ENCODE measurements at regions of chr11 and their contacts with region 1.

Region 1: DNA sequence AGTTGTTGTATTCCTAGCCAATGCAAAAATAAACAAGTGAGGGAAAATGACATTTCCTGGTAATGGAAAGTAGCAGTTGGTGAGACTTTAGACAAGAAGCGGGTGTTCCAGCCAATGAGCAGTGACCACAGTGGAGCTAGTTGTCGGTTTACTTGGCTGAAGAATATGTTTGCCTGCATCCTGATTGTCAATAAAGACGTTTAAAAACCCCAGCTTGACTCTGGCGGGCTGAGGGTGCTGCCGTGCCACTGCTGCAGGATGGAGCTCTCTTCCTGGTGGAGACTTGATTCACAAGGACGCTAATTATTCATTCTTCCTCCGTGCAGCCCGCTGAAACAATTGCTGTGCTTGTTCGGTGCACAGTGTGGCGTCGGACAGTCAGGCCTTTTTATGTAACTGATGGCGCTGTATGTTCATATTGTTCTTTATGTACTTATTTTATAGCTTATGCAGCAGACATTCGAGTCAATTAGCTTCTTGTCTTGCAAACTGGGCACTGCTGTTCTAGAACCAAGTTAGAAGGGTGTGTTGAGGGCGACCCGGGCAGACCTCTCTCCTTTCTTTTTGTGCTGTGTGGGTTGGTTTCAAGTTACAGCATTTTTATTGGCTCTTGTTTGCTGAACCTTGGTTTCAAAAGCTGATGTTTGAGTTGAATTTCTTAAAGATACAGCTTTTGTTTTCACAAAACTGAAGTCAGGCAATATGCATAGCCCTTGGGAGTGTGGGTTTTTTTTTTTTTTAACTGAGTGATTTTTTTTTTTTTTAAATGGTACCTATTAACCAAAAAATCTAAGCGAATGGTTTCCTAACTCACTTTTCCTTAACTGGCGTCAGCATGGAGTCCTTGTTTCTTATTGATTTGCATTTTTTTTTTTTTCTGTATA is 153.9 kb downstream of the TEAD1 start:
- DNase-seq: peak; percentile 53 to 66
- H3K4me3 ChIP-seq: peak overlapping the region; percentile 39
- H3K4me3 Mint-ChIP-seq: peak overlapping the region; percentile 90
- H3K27ac Mint-ChIP-seq: peak overlapping the region; percentile 93
- H3K4me1 ChIP-seq: peaks cover 40% of the 10 kb centered on the region
- H3K4me1 Mint-ChIP-seq: peaks cover 53% of the 10 kb centered on the region
- H3K27me3 ChIP-seq: no peaks in the 10 kb centered on the region
- H3K27me3 Mint-ChIP-seq: no peaks in the 10 kb centered on the region
- CTCF ChIP-seq: peak in 1 of 2 experiments; percentile 3

Region 2: DNA sequence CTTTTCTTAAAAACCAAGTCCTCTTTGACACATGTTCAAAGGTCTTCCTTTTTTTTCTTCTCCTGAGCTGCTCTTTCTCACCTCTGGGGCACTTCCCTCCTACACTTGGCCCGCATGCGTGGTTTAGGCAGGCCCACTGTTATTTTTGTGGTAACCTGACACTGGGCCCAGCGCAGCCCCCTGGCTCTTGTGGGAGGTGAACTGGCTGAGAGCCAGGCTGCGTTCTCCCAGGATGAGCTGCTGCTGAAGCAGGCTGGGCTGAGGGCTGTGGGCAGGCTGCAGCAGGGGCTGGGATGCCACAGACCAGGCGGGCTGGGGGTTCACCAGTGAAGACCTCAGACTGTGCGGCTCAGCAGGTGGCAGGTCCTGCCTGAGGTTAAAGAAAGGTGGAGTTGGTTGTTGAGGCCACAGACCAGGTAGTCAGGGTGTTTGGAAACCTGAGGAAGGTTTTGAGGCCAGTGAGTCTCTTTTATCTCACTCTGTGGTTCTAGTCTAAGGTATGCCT is 81.5 kb before region 1 on chr11:
- CTCF ChIA-PET with region 1: no interaction called
- POLR2A ChIA-PET with region 1: no interaction called
- intact Hi-C with region 1: no loop called
- DNase-seq: peak in 1 of 2 experiments; percentile 7
- H3K4me3 ChIP-seq: no peak overlapping the region
- H3K4me3 Mint-ChIP-seq: no peak overlapping the region
- H3K27ac Mint-ChIP-seq: no peak overlapping the region
- H3K4me1 ChIP-seq: peaks cover 4% of the 10 kb centered on the region; the same call in 1 of the 2 replicates
- H3K4me1 Mint-ChIP-seq: peaks cover 24% of the 10 kb centered on the region
- H3K27me3 ChIP-seq: no peaks in the 10 kb centered on the region
- H3K27me3 Mint-ChIP-seq: no peaks in the 10 kb centered on the region
- CTCF ChIP-seq: no peak

Region 3: GRCh38 chr11:12813371-12814225 is 14.6 kb before region 1 on chr11:
- CTCF ChIA-PET with region 1: interaction called, 11 read pairs
- POLR2A ChIA-PET with region 1: interaction called, 4 read pairs
- intact Hi-C with region 1: loop called (anchors 1 kb)
- DNase-seq: no peak
- H3K4me3 ChIP-seq: no peak overlapping the region
- H3K4me3 Mint-ChIP-seq: peak overlapping the region; percentile 60
- H3K27ac Mint-ChIP-seq: peak overlapping the region; percentile 88
- H3K4me1 ChIP-seq: peaks cover 70% of the 10 kb centered on the region
- H3K4me1 Mint-ChIP-seq: peaks cover 48% of the 10 kb centered on the region
- H3K27me3 ChIP-seq: no peaks in the 10 kb centered on the region
- H3K27me3 Mint-ChIP-seq: no peaks in the 10 kb centered on the region
- CTCF ChIP-seq: no peak

Region 4: GRCh38 chr11:12845739-12846358 is 17.7 kb after region 1 on chr11:
- CTCF ChIA-PET with region 1: interaction called, 11 read pairs
- POLR2A ChIA-PET with region 1: interaction called, 18 read pairs
- intact Hi-C with region 1: loop called (anchors 1 kb)
- DNase-seq: peak; percentile 79 to 90
- H3K4me3 ChIP-seq: no peak overlapping the region
- H3K4me3 Mint-ChIP-seq: peak overlapping the region; percentile 62
- H3K27ac Mint-ChIP-seq: peak overlapping the region; percentile 93
- H3K4me1 ChIP-seq: peaks cover 45% of the 10 kb centered on the region
- H3K4me1 Mint-ChIP-seq: peaks cover 19% of the 10 kb centered on the region
- H3K27me3 ChIP-seq: no peaks in the 10 kb centered on the region
- H3K27me3 Mint-ChIP-seq: no peaks in the 10 kb centered on the region
- CTCF ChIP-seq: no peak

Region 5: GRCh38 chr11:12901874-12902481 is 73.8 kb after region 1 on chr11:
- CTCF ChIA-PET with region 1: no interaction called
- POLR2A ChIA-PET with region 1: no interaction called
- intact Hi-C with region 1: no loop called
- DNase-seq: no peak
- H3K4me3 ChIP-seq: no peak overlapping the region
- H3K4me3 Mint-ChIP-seq: no peak overlapping the region
- H3K27ac Mint-ChIP-seq: no peak overlapping the region
- H3K4me1 ChIP-seq: no peaks in the 10 kb centered on the region
- H3K4me1 Mint-ChIP-seq: no peaks in the 10 kb centered on the region
- H3K27me3 ChIP-seq: no peaks in the 10 kb centered on the region
- H3K27me3 Mint-ChIP-seq: no peaks in the 10 kb centered on the region
- CTCF ChIP-seq: no peak

Measured in Caco-2 (cell line).